ENCODE measurements at regions of chr1 and their contacts with region 1.

Region 1: DNA sequence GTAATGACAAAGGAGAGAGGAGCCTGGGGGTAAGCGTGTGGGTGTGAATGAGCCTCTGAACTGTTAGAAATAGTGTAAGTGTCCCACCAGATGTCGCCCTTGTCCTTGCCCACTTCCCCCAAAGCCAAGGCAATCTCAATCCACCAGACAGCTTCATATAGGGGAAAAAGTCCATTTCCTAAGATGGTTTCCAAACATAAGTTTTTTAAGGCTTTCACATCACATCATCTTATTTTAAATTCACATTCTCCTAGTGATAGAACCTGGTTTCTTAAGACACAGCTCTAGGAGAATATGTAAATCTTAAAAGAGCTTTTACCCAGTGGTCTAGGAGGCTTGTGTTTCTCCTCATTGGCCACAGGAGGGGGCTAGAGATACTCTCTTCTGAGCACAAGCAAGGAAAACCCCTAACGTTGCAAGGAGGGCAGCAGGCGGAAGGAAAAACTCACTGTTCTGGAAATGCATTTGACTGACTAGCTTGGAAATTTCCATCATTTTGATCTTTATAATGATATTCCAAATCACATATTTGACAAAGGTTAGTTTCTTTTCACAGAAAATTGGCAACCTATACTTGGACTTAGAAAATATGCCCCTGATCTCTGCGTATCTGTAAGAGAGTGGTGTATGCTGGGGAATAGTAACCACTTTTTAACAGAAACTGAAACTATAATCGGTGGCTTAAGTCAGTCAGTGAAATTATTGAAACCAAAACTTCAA is 51.9 kb upstream of the LPAR3 start:
- DNase-seq: peak in 2 of 3 donors; percentile 35 to 76
- ATAC-seq: peak; percentile 98 to 99 (median 99)
- H3K4me3 ChIP-seq: peak overlapping the region; percentile 34 to 54 (median 47)
- H3K27ac ChIP-seq: peak overlapping the region; percentile 56 to 81 (median 63)
- H3K4me1 ChIP-seq: no peaks in the 10 kb centered on the region
- H3K27me3 ChIP-seq: no peaks in the 10 kb centered on the region
- CTCF ChIP-seq: peak; percentile 90 to 91 (median 90)
- POLR2A ChIP-seq: no peak

Region 2: DNA sequence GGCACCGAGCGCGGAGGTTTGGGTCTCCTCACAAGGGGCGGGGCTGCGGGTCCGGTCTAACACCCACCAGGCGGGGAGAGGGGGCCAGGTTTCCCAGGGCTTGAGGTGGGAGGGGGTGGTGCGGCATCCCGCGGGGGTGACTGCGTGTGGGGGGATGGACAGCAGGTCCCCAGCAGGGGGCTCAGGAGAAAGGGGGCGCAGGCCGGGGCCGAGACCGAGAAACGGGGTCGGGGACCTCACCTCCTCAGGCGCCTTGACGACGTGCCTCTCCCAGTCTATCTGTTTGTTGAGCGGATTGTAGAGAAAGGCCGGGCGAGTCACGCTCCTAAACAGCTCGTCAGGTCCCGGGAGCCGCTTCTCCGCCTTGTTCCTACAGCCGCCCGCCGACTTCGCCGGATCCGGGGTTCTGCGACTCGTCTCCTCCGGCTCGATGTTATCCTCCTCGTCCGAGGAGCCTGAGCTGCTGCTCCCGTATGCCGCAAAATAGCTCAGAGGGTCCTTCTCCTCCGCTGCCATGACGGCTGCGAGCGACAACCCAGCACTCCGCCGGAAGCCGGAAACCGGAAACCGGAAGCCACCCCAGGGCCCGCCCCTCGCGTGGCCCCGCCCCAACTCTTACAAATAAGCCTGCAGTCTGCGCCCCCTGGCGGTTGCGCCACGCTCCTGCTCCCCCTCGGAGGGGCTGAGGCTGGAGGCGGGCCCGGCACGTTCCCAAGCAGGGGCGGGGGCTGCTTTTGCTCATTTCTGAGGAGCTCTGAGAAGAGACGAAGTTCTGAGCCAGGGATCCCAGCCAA is 314.4 kb after region 1 on chr1 and contains the start of gene C1orf52:
- intact Hi-C with region 1: loop called (anchors 10 kb)
- DNase-seq: peak; percentile 94 to 95 (median 95)
- ATAC-seq: peak; percentile 98 to 99 (median 98)
- H3K4me3 ChIP-seq: peak within 1 kb of the TSS; percentile 66 to 93 (median 85)
- H3K27ac ChIP-seq: peak within 1 kb of the TSS; percentile 68 to 74 (median 70)
- H3K4me1 ChIP-seq: peaks cover 0 to 33% (median 12%) of the 10 kb centered on the region in 4 donors
- H3K27me3 ChIP-seq: no peaks in the 10 kb centered on the region
- CTCF ChIP-seq: peak; percentile 97 to 99 (median 98)
- POLR2A ChIP-seq: peak; percentile 54
- total RNA-seq, gene C1orf52: 4.7 to 8.0 (median 6.7) TPM

Region 3: DNA sequence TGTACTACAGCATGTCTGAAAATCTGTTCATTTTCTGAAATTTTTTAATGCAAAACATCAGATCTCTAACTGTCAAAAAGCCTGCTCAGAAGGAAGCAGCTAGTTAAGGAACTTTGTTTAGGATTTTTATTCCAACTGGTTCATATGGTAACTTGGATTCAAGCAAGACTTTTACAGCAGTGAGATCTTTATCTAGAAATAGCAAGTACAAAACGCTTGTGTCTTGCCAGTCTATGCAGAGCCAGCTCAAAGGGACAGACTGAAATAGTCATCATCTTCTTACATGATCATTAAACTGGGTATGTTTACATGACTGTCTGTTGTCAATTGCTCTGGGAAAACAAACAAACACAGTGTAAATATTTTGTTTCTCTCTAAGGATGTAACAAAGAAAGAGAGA is 482.4 kb after region 1 on chr1:
- intact Hi-C with region 1: no loop called
- DNase-seq: no peak
- ATAC-seq: peak; percentile 66 to 80 (median 72)
- H3K4me3 ChIP-seq: no peak overlapping the region
- H3K27ac ChIP-seq: no peak overlapping the region
- H3K4me1 ChIP-seq: peaks cover 0 to 12% (median 0%) of the 10 kb centered on the region in 4 donors
- H3K27me3 ChIP-seq: no peaks in the 10 kb centered on the region
- CTCF ChIP-seq: no peak
- POLR2A ChIP-seq: no peak